ENCODE measurements at regions of chr16 and their contacts with region 1.

Region 1: GRCh38 chr16:21300309-21301167 is 22.4 kb upstream of the CRYM start:
- DNase-seq: peak; percentile 88
- H3K4me3 Mint-ChIP-seq: peak overlapping the region; percentile 86
- H3K27ac Mint-ChIP-seq: peak overlapping the region; percentile 70
- H3K4me1 Mint-ChIP-seq: peaks cover 25% of the 10 kb centered on the region
- H3K27me3 Mint-ChIP-seq: peaks cover 32% of the 10 kb centered on the region

Region 2: GRCh38 chr16:20806168-20807050 is 494.1 kb before region 1 on chr16 and contains the starts of genes ERI2 and REXO5:
- intact Hi-C with region 1: loop called (anchors 10 kb)
- DNase-seq: peak; percentile 93
- H3K4me3 Mint-ChIP-seq: peak within 1 kb of the TSS; percentile 94
- H3K27ac Mint-ChIP-seq: peak within 1 kb of the TSS; percentile 96
- H3K4me1 Mint-ChIP-seq: peaks cover 24% of the 10 kb centered on the region
- H3K27me3 Mint-ChIP-seq: no peaks in the 10 kb centered on the region
- total RNA-seq, gene ERI2: 15.1 and 15.7 TPM in 2 replicates
- total RNA-seq, gene REXO5: 9.3 and 11.7 TPM in 2 replicates

Region 3: GRCh38 chr16:21158208-21159110 is 142.1 kb before region 1 on chr16 and contains the start of gene LDAF1:
- intact Hi-C with region 1: loop called (anchors 2 kb)
- DNase-seq: peak; percentile 96
- H3K4me3 Mint-ChIP-seq: peak within 1 kb of the TSS; percentile 91
- H3K27ac Mint-ChIP-seq: peak within 1 kb of the TSS; percentile 61
- H3K4me1 Mint-ChIP-seq: peaks cover 14% of the 10 kb centered on the region
- H3K27me3 Mint-ChIP-seq: no peaks in the 10 kb centered on the region
- total RNA-seq, gene LDAF1: 7.2 and 7.3 TPM in 2 replicates

Region 4: DNA sequence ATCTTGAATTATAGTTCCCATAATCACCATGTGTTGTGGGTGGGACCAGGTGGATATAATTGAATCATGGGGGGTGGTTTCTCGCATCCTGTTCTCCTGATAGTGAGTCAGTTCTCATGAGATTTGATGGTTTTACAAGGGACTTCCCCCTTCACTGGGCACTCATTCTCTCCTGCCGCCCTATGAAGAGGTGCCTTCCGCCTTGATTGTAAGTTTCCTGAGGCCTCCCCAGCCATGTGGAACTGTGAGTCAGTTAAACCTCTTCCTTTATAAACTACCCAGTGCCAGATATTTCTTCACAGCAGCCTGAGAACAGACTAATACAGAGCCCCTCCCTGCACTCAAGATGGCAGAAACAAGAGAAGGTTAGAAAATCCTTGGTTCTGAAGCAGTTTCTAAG is 115.7 kb before region 1 on chr16:
- intact Hi-C with region 1: loop called (anchors 2 kb)
- DNase-seq: no peak
- H3K4me3 Mint-ChIP-seq: no peak overlapping the region
- H3K27ac Mint-ChIP-seq: no peak overlapping the region
- H3K4me1 Mint-ChIP-seq: peaks cover 15% of the 10 kb centered on the region
- H3K27me3 Mint-ChIP-seq: no peaks in the 10 kb centered on the region

Region 5: DNA sequence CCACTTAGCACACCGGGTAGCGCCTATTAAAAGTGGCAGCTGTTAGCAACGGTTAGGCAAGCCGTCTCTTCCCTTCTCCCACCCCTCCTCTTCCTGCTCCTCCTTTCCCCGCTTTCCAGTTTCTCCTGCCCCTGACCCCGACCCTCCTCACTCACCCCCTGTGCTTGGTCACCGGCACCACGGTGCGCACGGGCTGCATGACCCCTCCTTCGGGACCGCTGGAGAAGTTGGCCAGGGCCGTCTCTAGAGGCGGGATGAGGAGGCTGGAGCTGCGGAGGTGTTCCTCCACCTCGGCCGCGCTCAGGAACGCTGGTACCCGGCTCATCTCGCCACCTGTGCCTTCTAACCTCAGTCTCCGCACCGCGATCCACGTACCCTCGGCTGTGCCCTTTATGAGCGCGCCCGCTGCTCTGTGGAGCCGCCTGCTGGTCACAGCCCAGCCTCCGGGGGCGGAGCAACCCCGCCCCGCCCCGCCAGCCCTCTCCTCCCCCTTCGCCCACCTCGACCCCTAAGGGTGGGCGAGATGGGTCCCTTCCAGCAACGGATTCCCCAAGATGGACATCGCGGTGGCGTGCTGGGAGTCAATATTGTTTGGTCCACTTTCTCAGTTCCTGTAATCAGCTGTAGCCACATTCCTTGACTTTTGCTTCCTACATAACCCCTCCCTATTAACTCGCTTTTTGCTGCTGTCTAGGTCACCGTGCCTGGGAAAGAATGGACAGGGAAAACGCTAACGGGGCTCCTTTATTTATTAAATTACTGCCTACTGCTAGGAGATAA is 22.4 kb before region 1 on chr16 and contains the start of gene CRYM:
- intact Hi-C with region 1: loop called (anchors 2 kb)
- DNase-seq: peak; percentile 84
- H3K4me3 Mint-ChIP-seq: peak within 1 kb of the TSS; percentile 63
- H3K27ac Mint-ChIP-seq: no peak within 1 kb of the TSS
- H3K4me1 Mint-ChIP-seq: peaks cover 2% of the 10 kb centered on the region
- H3K27me3 Mint-ChIP-seq: peaks cover 63% of the 10 kb centered on the region
- total RNA-seq, gene CRYM: not detected in 2 replicates